Left cardiac atrium (tissue), 4 donors: ENCODE measurements at regions of chr16 and their contacts with region 1.

Region 1: DNA sequence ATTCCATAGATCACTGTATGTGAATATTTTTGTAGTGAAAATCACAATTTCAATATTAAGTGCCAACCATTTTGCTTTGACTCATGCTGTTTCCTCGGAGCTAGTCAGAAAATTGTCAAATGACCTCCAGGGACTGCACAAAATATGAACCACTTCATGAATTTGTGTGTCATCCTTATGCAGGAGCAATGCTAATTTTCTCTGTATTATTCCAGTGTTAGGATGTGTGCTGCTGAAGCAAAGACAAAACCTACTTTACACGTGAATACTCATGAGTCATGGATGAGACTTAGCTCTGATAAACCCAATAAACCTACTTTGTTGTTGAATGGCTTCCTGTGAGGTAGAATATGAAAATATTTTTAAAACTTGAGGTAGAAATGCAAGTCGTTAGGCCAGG is 65.2 kb downstream of the SHCBP1 start:
- DNase-seq: no peak
- ATAC-seq: no peak

Region 2: GRCh38 chr16:46607529-46607928 is 51.6 kb after region 1 on chr16:
- intact Hi-C with region 1: loop called (anchors 5 to 10 kb)
- DNase-seq: no peak
- ATAC-seq: no peak

Region 3: GRCh38 chr16:46621006-46621933 is 65.3 kb after region 1 on chr16 and contains the start of gene SHCBP1:
- intact Hi-C with region 1: no loop called
- DNase-seq: peak; percentile 87
- ATAC-seq: peak; percentile 92 to 94
- total RNA-seq, gene SHCBP1: 0.76 to 1.8 TPM